ENCODE measurements at regions of chr20 and their contacts with region 1.

Region 1: DNA sequence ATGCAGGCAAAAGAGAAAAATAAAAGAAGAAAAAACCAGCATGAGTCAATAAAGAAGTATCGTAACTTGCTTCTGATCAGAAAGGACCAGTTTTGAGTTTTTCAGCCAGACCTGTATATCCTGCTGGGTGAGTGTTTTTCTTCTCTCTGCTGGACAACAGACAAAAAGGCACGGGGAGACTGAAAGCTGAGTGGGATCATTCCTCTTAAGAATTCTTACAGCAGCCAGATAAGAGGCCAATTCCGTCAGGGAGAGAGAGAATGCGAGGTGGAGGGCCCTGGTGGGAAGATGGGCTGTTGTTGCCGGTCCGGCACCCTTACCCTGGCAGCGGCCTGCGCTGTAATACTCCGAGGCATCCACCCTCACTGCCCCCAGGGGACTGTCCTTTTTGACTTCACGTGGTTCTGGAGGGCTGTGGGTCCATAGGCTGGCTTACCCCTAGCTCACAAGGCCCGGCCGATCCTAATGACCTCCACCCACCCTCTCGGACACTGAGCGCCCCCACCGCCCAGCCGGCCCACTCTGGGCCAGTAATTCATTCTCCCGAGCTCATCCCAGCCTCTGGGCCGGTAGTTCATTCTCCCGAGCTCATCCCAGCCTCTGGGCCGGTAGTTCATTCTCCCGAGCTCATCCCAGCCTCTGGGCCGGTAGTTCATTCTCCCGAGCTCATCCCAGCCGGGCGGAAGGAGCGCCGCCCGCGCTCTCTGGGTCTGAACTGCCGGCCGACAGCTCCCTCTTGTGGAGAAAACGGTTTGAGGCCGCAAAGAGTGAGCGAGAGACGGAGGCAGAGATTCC is 118.3 kb upstream of the SIRPA start:
- DNase-seq: peak; percentile 86
- ATAC-seq: peak; percentile 93
- H3K4me3 Mint-ChIP-seq: peak overlapping the region; percentile 77
- H3K27ac Mint-ChIP-seq: no peak overlapping the region
- H3K4me1 Mint-ChIP-seq: peaks cover 12% of the 10 kb centered on the region
- H3K27me3 Mint-ChIP-seq: peaks cover 13% of the 10 kb centered on the region

Region 2: DNA sequence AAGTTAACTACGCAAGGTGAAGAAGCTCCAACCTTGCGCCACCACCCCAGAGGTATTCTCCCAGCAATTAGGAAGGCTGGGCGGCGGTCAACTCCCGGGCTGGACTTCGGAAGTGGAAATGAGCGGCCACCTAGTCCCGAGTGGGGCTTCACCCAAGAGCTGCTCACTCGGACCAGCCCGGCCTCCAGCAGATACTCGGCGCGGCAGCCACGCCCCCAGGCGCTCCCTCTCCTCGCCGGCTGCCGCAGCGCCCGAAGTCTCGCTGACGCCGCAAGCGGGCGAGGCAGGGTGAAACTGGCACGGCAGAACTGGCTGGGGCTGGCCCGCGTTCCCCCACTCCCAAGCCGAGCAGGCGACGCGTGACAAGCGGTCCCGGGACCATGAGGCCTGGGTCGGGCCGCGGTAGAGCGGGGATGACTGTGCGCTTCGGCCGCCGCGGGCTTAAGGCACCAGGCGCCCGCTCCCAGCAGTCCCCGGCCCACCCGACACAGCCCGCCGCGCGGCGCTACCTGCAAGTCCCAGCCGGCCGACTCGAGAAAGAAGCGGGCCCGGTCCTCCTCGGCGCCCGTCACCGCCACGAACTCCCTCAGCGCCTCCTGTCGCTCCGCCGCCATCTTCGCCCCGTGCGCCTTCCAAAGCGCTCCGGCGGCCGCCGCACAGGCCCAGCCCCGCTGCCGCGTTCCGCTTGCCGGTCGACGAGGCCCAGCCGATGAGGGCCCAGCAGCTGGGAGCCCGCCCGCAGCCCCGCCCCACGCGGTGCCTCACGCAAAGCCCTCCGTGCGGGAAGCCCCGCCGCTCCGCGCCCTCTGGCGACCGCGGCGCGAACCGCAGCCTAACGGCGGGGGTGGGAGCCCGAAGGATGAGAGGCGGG is 310.4 kb before region 1 on chr20 and contains the start of gene NSFL1C:
- CTCF ChIA-PET with region 1: interaction called, 34 read pairs
- POLR2A ChIA-PET with region 1: no interaction called
- DNase-seq: peak; percentile 96
- ATAC-seq: peak; percentile 97
- H3K4me3 Mint-ChIP-seq: peak within 1 kb of the TSS; percentile 81
- H3K27ac Mint-ChIP-seq: peak within 1 kb of the TSS; percentile 75
- H3K4me1 Mint-ChIP-seq: peaks cover 45% of the 10 kb centered on the region
- H3K27me3 Mint-ChIP-seq: peaks cover 17% of the 10 kb centered on the region
- total RNA-seq, gene NSFL1C: 60.5 to 67.8 TPM

Region 3: GRCh38 chr20:1524004-1524403 is 252.9 kb before region 1 on chr20:
- CTCF ChIA-PET with region 1: interaction called, 13 read pairs
- POLR2A ChIA-PET with region 1: no interaction called
- DNase-seq: no peak
- ATAC-seq: no peak
- H3K4me3 Mint-ChIP-seq: no peak overlapping the region
- H3K27ac Mint-ChIP-seq: no peak overlapping the region
- H3K4me1 Mint-ChIP-seq: no peaks in the 10 kb centered on the region
- H3K27me3 Mint-ChIP-seq: peaks cover 21% of the 10 kb centered on the region

Region 4: GRCh38 chr20:1651268-1652058 is 125.4 kb before region 1 on chr20:
- CTCF ChIA-PET with region 1: interaction called, 10 read pairs
- POLR2A ChIA-PET with region 1: no interaction called
- DNase-seq: no peak
- ATAC-seq: peak; percentile 19
- H3K4me3 Mint-ChIP-seq: peak overlapping the region; percentile 19
- H3K27ac Mint-ChIP-seq: peak overlapping the region; percentile 74
- H3K4me1 Mint-ChIP-seq: peaks cover 83% of the 10 kb centered on the region
- H3K27me3 Mint-ChIP-seq: no peaks in the 10 kb centered on the region

Region 5: DNA sequence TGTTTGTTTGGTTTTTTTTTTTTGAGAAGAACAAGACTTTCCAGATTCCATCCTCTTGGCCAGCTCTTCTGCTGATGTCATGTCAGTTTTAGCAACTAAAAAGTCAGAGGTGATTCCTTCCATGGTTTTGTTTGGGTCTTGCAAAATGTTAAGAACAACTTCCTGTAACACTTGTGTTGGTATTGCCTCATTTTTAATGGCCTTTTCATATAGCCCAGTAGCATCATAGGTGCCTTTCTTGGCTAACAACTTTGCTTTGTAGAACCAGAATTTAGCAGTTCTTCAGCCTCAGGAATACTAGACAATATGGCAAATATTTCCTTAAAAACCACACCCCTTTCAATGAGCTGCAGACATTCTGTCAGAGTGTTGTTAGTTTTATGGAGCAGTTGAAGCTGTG is 19.8 kb before region 1 on chr20:
- CTCF ChIA-PET with region 1: interaction called, 12 read pairs
- POLR2A ChIA-PET with region 1: no interaction called
- DNase-seq: no peak
- ATAC-seq: no peak
- H3K4me3 Mint-ChIP-seq: no peak overlapping the region
- H3K27ac Mint-ChIP-seq: no peak overlapping the region
- H3K4me1 Mint-ChIP-seq: no peaks in the 10 kb centered on the region
- H3K27me3 Mint-ChIP-seq: peaks cover 31% of the 10 kb centered on the region